Activated CD4-positive, alpha-beta T cell treated with anti-CD3 and anti-CD28 coated beads for 36 hours (primary cell): ENCODE measurements at regions of chr11 and their contacts with region 1.

Region 1: DNA sequence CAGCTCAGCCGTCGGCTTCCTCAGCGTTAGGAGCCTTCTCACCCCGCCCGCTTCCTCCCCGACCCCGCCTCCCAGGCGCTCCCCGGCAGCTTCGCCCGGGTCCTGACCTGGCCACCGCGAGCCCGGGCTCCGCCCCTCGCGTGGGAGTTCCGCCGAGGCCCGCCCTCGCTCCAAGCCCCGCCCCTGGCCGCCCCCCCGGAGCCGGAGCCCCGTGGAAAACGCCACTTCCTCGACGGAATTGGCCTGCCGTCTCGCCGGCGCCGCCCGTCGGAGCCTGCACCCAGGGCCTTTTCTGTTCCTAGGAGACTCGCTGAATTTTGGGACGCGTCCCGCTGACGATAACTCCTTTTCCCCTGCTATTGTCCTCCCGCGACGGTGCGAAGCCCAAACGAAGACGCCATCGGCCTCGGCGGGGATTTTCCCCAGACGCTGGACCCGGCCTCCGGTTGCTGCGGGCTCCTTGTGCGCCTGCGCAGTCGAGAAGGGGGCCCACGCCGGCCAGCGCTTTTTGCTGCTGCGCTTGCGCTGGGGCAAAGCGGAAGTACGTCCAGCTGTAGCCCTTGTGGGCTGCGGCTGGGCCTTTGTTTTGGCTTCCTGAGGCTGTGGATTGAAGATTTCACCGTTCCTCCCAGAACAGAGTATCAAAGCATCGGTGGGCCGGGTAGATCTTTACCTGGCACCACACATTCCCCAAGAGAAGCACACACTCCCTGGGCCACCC is 10.0 kb downstream of the RELA start:
- DNase-seq: peak; percentile 98
- ATAC-seq: peak; percentile 89
- H3K4me3 Mint-ChIP-seq: peak overlapping the region; percentile 79
- H3K27ac Mint-ChIP-seq: peak overlapping the region; percentile 95
- H3K4me1 Mint-ChIP-seq: peaks cover 45% of the 10 kb centered on the region
- H3K27me3 Mint-ChIP-seq: no peaks in the 10 kb centered on the region

Region 2: GRCh38 chr11:65524741-65525545 is 127.7 kb before region 1 on chr11 and contains the start of gene SCYL1:
- CTCF ChIA-PET with region 1: no interaction called
- POLR2A ChIA-PET with region 1: no interaction called
- intact Hi-C with region 1: loop called in 1 of 2 experiments (anchors 1 kb)
- DNase-seq: peak; percentile 91
- ATAC-seq: peak; percentile 85
- H3K4me3 Mint-ChIP-seq: peak within 1 kb of the TSS; percentile 86
- H3K27ac Mint-ChIP-seq: peak within 1 kb of the TSS; percentile 93
- H3K4me1 Mint-ChIP-seq: peaks cover 51% of the 10 kb centered on the region
- H3K27me3 Mint-ChIP-seq: no peaks in the 10 kb centered on the region
- total RNA-seq, gene SCYL1: 66.5 to 78.8 TPM

Region 3: DNA sequence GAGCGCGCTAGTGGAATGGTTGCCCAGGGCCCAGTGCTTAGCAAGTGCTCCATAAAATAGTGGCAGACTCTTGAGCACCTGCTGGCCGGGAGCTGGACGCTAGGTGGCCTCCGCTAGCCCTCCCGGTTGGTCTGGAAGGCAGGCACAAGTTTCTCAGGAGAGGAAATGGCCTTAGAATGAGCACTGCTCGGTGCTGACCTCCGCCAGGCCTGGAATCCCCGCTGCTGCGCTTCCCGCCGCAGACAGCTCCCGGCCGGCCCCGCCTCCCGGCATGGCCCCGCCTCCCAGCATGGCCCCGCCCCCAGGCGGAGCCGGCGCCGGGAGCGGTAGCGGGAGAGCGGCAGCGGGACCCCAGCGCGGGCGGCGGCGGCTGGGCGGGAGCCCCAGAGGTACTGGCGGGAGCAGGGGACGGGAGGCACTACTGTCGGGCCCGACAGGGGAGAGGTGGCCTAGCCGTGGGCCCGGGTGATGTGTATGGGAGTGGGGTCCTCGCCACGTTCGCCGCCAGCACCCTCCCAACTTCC is 14.8 kb before region 1 on chr11 and contains the start of gene SIPA1:
- CTCF ChIA-PET with region 1: interaction called, 4 read pairs
- POLR2A ChIA-PET with region 1: interaction called, 18 read pairs
- intact Hi-C with region 1: loop called (anchors 1 to 2 kb)
- DNase-seq: peak; percentile 86
- ATAC-seq: peak; percentile 67
- H3K4me3 Mint-ChIP-seq: peak within 1 kb of the TSS; percentile 90
- H3K27ac Mint-ChIP-seq: peak within 1 kb of the TSS; percentile 95
- H3K4me1 Mint-ChIP-seq: peaks cover 42% of the 10 kb centered on the region
- H3K27me3 Mint-ChIP-seq: no peaks in the 10 kb centered on the region
- total RNA-seq, gene SIPA1: 181 to 202 TPM

Region 4: DNA sequence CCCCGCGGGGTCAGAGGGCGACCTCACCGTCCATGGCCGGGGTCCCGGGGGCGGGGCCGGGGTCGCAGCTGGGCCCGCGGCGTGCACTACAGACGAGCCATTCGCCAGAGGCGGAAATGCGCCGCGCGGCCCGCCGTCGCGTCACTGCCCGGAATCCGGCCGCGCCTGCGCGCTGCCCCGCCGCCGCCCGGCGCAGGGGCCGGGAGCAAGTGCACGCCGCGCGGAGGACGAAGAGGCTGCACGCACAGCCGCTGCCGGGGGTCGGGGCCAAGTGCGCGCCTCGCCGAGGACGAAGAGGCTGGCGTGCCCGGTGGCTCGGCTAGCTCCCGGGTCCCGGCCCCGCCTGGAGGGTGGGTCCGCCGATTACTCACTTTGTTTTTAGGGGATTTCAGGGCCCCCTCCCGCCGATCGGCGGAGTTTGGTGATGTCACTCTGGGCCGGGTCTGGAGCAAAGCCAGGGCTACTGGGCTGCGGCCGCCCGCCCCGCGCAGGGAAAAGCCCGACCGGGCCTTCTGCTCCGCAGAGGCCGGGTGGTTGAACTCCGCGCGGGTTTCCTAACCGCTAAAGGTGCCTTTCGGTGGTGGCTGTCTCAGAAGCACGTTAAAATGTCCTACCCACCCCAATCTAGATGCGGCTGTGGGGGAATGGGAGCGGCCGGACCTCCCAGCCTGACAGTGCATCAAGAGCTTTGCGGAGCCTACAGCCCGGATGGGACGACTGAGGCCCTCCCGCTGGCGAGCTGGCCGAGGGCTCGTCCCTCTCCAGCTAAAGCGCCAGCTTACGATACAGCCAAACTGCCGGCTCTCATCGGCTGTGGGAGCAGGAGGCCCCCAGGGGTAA is 10.3 kb after region 1 on chr11 and contains the start of gene RELA:
- CTCF ChIA-PET with region 1: interaction called, 3 read pairs
- POLR2A ChIA-PET with region 1: interaction called, 16 read pairs
- intact Hi-C with region 1: loop called (anchors 1 kb)
- DNase-seq: peak; percentile 96
- ATAC-seq: peak; percentile 90
- H3K4me3 Mint-ChIP-seq: peak within 1 kb of the TSS; percentile 88
- H3K27ac Mint-ChIP-seq: peak within 1 kb of the TSS; percentile 97
- H3K4me1 Mint-ChIP-seq: peaks cover 41% of the 10 kb centered on the region
- H3K27me3 Mint-ChIP-seq: no peaks in the 10 kb centered on the region
- total RNA-seq, gene RELA: 76.9 to 109 TPM

Region 5: DNA sequence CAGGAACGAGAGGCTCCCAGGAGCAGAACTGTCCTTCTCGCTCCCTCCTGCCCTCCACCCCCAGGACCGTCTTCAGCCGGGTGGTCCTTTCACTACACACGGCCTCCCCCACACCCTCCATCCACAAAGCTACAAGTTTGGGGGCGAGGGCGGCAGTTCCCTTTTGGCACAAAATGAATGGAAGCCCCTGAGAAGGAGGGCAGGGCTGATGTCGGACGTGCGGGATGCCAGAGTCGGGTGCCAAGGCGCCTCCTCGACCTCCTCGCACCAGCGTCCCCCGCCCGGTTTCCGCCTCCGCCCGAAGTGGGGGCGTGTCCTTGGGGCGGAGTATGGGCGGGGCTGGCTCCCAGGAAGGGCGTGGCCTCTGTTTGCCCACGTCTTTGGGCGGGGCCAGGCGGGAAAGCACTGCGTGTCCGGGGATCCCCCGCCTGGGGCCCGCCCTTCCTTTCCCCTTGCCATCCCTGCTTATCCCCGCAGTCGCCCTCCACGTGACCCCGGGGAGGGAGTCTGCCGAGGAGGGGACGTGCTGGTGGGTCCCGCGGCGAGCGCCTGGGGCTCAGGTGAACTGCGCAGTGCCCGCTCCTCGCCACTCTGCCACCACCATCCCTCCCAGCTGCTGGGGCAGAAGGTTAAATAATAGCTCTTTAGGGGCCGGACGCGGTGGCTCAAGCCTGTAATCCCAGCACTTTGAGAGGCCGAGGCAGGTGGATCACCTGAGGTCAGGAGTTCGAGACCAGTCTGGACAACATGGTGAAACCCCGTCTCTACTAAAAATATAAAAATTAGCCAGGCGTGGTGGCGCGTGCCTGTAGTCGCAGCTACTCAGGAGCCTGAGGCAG is 220.9 kb after region 1 on chr11:
- CTCF ChIA-PET with region 1: no interaction called
- POLR2A ChIA-PET with region 1: no interaction called
- intact Hi-C with region 1: loop called in 1 of 2 experiments (anchors 1 kb)
- DNase-seq: peak; percentile 97
- ATAC-seq: peak; percentile 93
- H3K4me3 Mint-ChIP-seq: peak overlapping the region; percentile 84
- H3K27ac Mint-ChIP-seq: peak overlapping the region; percentile 91
- H3K4me1 Mint-ChIP-seq: peaks cover 15% of the 10 kb centered on the region
- H3K27me3 Mint-ChIP-seq: no peaks in the 10 kb centered on the region

Region 6: DNA sequence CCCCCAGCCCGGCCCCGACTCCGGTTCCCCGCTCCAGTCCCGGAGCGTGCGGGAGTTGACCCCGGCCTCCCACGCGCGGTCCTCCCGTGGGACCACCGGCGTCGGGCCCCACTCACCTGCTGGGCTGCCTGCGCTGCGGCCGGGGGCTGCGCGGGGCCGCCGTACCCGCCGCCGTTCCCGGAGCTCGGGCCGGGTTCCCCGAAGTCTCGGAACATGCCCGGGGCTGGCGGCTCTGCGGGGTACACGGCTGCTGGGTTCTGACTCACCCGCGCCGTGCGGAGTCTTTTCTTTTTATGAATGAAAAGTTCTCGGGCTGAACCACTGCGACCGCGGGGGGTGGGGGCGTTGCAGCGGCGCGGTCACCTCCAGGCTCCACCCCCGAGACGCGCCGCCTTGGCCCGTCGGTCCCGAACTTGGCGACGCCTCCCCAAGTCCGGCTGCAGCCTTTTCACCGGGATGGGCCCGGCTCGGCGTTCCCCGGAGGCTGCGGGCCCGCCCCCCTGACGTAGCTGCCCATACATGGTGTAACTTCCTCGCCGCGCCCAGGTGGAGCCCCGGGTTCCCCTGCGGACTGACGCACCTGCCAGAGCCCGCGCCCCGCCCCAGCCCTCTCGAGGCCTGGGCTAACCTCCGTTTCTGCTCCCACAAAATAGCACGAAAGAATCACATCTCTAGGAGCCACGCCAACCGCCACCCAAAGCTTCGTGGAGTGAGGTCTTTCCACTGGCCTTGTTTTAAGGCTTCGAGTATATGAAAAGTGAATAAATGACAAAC is 247.6 kb after region 1 on chr11 and contains the start of gene FOSL1:
- CTCF ChIA-PET with region 1: no interaction called
- POLR2A ChIA-PET with region 1: no interaction called
- intact Hi-C with region 1: loop called in 1 of 2 experiments (anchors 1 kb)
- DNase-seq: peak; percentile 98
- ATAC-seq: peak; percentile 85
- H3K4me3 Mint-ChIP-seq: peak within 1 kb of the TSS; percentile 75
- H3K27ac Mint-ChIP-seq: peak within 1 kb of the TSS; percentile 78
- H3K4me1 Mint-ChIP-seq: peaks cover 35% of the 10 kb centered on the region
- H3K27me3 Mint-ChIP-seq: peaks cover 4% of the 10 kb centered on the region
- total RNA-seq, gene FOSL1: 11.1 to 11.3 TPM